PC-9 (cell line): ENCODE measurements at regions of chr14 and their contacts with region 1.

Region 1: DNA sequence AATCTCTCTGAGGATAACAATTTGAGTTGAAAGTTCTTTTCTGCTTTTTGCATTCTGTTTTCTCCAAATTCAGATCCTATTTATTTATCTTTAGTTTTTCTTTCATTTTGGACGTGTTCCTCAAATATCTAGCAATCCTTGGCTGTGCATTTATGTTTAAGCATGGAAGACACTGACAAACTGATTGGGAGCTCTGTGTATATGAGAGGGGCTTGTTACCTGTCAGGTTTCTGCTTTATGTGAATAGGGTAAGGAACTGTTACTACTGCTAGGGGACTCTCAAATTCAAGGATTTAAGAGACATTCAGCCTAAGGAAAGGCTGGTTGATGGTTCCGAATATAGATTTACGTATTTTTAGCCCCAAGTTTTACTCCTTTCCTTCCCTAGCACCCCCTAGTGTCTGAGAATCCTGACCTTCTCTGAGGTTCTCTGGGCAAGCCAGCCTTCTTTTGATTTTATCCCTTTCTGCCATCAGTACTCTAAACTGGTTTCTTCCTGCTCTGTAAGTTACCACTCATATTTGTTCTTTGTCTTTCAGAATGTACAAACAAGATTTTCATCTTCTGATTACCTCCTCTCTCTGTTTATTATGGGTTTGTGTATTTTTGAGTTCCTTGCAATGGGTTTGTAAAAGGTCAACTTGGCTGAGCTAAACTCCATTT is 30.5 kb downstream of the YLPM1 start:
- DNase-seq: no peak
- H3K4me3 ChIP-seq: no peak overlapping the region
- H3K27ac ChIP-seq: no peak overlapping the region
- H3K4me1 ChIP-seq: no peaks in the 10 kb centered on the region
- H3K27me3 ChIP-seq: no peaks in the 10 kb centered on the region
- CTCF ChIP-seq: peak; percentile 58; the same call in 1 of the 2 replicates

Region 2: GRCh38 chr14:73576391-73576790 is 1217.2 kb before region 1 on chr14:
- CTCF ChIA-PET with region 1: no interaction called
- POLR2A ChIA-PET with region 1: no interaction called
- intact Hi-C with region 1: no loop called
- DNase-seq: peak in 1 of 2 experiments; percentile 48
- H3K4me3 ChIP-seq: no peak overlapping the region
- H3K27ac ChIP-seq: no peak overlapping the region
- H3K4me1 ChIP-seq: peaks cover 18% of the 10 kb centered on the region
- H3K27me3 ChIP-seq: no peaks in the 10 kb centered on the region
- CTCF ChIP-seq: no peak

Region 3: DNA sequence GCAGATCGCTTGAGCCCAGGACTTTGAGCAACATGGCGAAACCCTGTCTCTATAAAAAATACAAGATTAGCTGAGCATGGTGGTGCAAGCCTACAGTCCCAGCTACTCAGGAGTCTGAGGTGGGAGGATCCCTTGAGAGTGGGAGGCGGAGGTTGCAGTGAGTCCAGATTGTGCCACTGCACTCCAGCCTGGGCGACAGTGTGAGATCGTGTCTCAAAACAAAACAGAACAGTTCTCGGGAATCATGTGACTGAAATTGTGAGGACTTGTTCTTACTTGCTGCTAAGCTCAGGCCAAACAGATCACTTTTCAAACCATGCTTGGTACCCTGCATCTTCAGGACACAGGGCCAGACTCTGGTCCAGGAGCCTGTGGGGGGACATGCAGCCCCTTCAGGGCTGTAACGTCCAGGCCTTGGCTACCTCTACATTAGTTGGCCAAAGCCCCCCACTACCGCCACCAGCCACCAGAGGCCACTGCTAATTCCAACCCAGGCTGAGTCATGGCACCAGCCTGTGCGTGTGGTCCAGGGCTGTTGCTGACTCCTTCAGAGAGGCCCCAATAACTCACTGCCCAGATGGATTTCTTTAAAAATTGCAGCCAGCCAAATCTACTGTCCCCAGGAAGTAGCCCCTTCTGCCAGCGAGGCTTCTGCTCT is 334.2 kb before region 1 on chr14:
- CTCF ChIA-PET with region 1: no interaction called
- POLR2A ChIA-PET with region 1: no interaction called
- intact Hi-C with region 1: no loop called
- DNase-seq: peak in 1 of 2 experiments; percentile 65
- H3K4me3 ChIP-seq: no peak overlapping the region
- H3K27ac ChIP-seq: no peak overlapping the region
- H3K4me1 ChIP-seq: peaks cover 7% of the 10 kb centered on the region
- H3K27me3 ChIP-seq: no peaks in the 10 kb centered on the region
- CTCF ChIP-seq: peak; percentile 72

Region 4: GRCh38 chr14:74712499-74713394 is 80.9 kb before region 1 on chr14 and contains the starts of genes AREL1 and FCF1:
- CTCF ChIA-PET with region 1: no interaction called
- POLR2A ChIA-PET with region 1: interaction called, 15 read pairs
- intact Hi-C with region 1: no loop called
- DNase-seq: peak; percentile 86 to 92
- H3K4me3 ChIP-seq: peak within 1 kb of the TSS; percentile 67
- H3K27ac ChIP-seq: peak within 1 kb of the TSS; percentile 27; the same call in 1 of the 2 replicates
- H3K4me1 ChIP-seq: peaks cover 21% of the 10 kb centered on the region
- H3K27me3 ChIP-seq: no peaks in the 10 kb centered on the region
- CTCF ChIP-seq: no peak
- total RNA-seq, gene AREL1: 98.4 and 108 TPM in 2 replicates
- total RNA-seq, gene FCF1: 175 and 191 TPM in 2 replicates

Region 5: GRCh38 chr14:75069045-75069810 is 275.6 kb after region 1 on chr14 and contains the start of gene ZC2HC1C:
- CTCF ChIA-PET with region 1: no interaction called
- POLR2A ChIA-PET with region 1: no interaction called
- intact Hi-C with region 1: no loop called
- DNase-seq: peak; percentile 94 to 100
- H3K4me3 ChIP-seq: peak within 1 kb of the TSS; percentile 71
- H3K27ac ChIP-seq: peak within 1 kb of the TSS; percentile 79
- H3K4me1 ChIP-seq: peaks cover 32% of the 10 kb centered on the region
- H3K27me3 ChIP-seq: no peaks in the 10 kb centered on the region
- CTCF ChIP-seq: no peak
- total RNA-seq, gene ZC2HC1C: 11.9 and 13.8 TPM in 2 replicates

Region 6: DNA sequence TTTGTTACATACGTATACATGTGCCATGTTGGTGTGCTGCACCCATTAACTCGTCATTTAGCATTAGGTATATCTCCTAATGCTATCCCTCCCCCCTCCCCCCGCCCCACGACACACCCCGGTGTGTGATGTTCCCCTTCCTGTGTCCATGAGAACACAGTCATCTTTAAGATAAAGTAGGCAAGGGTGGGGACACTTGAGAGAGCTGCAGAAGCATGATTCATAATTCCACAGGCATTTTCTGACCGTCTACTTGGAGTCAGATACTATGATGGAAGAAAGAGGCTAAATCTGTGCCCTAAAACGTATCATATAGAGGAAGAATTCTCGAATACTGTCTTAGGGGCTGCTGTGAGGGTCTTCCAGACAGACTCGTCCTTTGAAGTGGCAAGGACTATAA is 1821.7 kb after region 1 on chr14:
- CTCF ChIA-PET with region 1: interaction called, 10 read pairs
- POLR2A ChIA-PET with region 1: no interaction called
- intact Hi-C with region 1: no loop called
- DNase-seq: no peak
- H3K4me3 ChIP-seq: no peak overlapping the region
- H3K27ac ChIP-seq: no peak overlapping the region
- H3K4me1 ChIP-seq: no peaks in the 10 kb centered on the region
- H3K27me3 ChIP-seq: peaks cover 73% of the 10 kb centered on the region
- CTCF ChIP-seq: no peak